GM12878 (cell line): ENCODE measurements at regions of chr2 and their contacts with region 1.

Region 1: DNA sequence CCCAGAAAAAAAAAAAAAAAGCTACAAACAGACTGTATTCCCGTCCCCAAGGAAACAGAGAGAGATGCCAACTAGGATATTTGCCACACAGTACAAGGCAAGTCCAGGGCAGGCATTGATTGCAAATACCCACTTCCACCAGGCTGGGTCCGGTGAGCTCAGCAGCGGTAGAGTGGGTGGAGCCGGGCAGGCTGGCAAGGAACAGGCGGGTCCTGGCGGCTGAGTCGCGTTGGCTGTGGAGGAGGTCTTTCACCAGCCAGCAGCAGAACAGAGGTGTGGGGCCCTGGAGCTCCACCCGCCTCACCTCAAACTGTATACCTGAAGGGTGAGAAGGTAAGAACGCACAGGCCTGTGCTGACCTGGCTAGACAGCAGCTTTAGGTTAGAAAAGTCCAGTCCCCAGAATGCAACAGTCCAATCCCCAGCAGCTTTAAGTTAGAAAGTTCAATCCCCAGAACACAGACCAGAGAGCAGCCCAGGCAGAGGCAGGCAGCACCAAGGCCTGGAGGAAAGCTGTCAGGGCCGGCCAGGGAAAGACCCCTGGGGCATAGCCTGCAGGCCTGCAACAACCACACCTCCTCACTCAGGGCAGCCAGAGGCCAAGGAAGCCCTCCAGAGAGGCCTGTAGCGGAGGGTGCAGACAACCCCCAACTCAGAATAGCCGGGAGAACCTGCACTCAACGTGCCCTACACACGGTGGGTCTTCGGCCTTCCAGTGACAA is 21.9 kb upstream of the MTERF4 start:
- DNase-seq: no peak
- ATAC-seq: no peak
- H3K4me3 ChIP-seq: no peak overlapping the region
- H3K27ac ChIP-seq: no peak overlapping the region
- H3K4me1 ChIP-seq: peaks cover 35% of the 10 kb centered on the region
- H3K27me3 ChIP-seq: no peaks in the 10 kb centered on the region
- CTCF ChIP-seq: no peak
- EP300 ChIP-seq: no peak
- POLR2A ChIP-seq: no peak
- RAD21 ChIP-seq: no peak

Region 2: DNA sequence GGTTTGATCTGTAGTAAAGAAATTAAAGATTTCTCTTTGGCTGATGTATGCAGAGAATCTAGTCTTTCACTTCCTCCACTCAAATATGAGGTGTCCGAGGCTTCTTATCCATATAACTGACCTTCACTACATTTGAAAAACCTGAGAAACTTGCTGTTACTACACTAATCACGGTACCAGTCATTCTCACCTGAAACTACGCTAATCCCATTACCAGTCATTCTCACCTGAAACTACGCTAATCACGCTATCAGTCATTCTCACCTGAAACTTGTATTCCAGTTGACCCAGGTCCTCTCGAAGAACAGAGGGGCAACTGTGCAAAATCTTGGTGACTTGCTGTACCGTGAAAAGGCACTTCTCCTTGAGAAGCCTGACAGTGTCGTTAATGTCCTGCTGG is 27.0 kb before region 1 on chr2:
- CTCF ChIA-PET with region 1: interaction called, 3 read pairs
- POLR2A ChIA-PET with region 1: interaction called, 10 read pairs
- RAD21 ChIA-PET with region 1: interaction called, 11 read pairs
- SMC1A ChIA-PET with region 1: interaction called, 4 read pairs
- in situ Hi-C with region 1: no loop called
- intact Hi-C with region 1: loop called (anchors 1 kb)
- DNase-seq: peak; percentile 86
- ATAC-seq: peak; percentile 58
- H3K4me3 ChIP-seq: peak overlapping the region; percentile 61; the same call in 1 of the 2 replicates
- H3K27ac ChIP-seq: peak overlapping the region; percentile 90
- H3K4me1 ChIP-seq: peaks cover 38% of the 10 kb centered on the region
- H3K27me3 ChIP-seq: no peaks in the 10 kb centered on the region
- CTCF ChIP-seq: no peak
- EP300 ChIP-seq: peak; percentile 95 to 99
- POLR2A ChIP-seq: 0 out of 2 replicates have a peak, but pooled peaks have one; percentile 34
- RAD21 ChIP-seq: no peak